PC-9 (cell line): ENCODE measurements at regions of chr6 and their contacts with region 1.

Region 1: GRCh38 chr6:117674991-117675657 is at the start of gene NUS1:
- DNase-seq: peak; percentile 95 to 96
- H3K4me3 ChIP-seq: peak within 1 kb of the TSS; percentile 78
- H3K27ac ChIP-seq: peak within 1 kb of the TSS; percentile 49
- H3K4me1 ChIP-seq: peaks cover 26% of the 10 kb centered on the region
- H3K27me3 ChIP-seq: no peaks in the 10 kb centered on the region
- CTCF ChIP-seq: peak; percentile 85
- total RNA-seq, gene NUS1: 17.0 and 22.2 TPM in 2 replicates

Region 2: DNA sequence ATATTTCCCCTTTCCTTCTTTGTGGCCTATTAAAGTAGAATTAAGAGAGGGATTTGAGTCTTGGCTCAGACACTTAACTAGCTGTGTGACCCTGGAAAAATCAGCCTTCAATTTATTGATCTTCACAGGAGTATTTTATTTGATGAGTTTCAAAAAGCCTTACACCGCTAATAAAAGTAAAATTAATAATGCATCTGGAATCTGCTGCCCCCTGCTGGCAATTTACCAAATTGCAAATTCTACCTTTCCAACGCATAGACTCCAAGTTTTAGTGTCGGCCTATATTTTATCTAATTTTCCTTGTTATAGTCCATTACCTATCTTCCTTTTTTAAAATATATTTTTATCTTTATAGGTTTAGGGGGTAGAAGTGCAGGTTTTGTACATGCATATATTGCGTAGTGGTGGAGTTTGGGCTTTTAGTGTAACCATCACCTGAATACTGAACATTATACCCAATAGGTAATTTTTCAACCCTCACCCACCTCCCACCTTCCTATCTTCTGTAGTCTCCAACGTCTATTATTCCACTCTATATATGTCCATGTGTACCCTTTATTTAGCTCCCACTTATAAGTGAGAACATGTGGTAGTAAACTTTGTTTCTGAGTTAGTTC is 119.1 kb before region 1 on chr6:
- CTCF ChIA-PET with region 1: no interaction called
- POLR2A ChIA-PET with region 1: no interaction called
- intact Hi-C with region 1: loop called (anchors 5 kb)
- DNase-seq: peak in 1 of 2 experiments; percentile 41
- H3K4me3 ChIP-seq: no peak overlapping the region
- H3K27ac ChIP-seq: no peak overlapping the region
- H3K4me1 ChIP-seq: peaks cover 10% of the 10 kb centered on the region
- H3K27me3 ChIP-seq: no peaks in the 10 kb centered on the region
- CTCF ChIP-seq: peak; percentile 97